ENCODE measurements at regions of chr21 and their contacts with region 1.

Region 1: DNA sequence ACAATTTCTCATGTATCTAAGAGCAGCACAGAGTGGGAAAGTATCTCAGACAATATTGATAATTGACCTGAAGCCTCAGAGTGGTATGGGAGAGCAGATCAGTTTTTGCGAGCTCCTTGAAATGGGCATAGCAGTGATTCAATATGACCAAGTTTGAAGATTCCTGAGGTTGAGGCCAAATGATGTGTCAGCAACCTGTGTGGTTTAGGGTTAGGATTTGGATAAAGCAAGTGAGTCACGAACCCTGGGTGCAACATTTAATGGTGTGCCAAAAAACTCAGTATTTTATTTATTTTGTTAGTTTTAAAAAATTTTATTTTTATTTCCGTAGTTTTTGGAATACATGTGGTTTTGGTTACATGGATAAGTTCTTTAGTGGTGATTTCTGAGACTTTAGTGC is 92.5 kb upstream of the C21orf91 start:
- H3K4me3 Mint-ChIP-seq: no peak overlapping the region
- H3K27ac Mint-ChIP-seq: no peak overlapping the region
- H3K4me1 Mint-ChIP-seq: no peaks in the 10 kb centered on the region
- H3K27me3 Mint-ChIP-seq: no peaks in the 10 kb centered on the region

Region 2: DNA sequence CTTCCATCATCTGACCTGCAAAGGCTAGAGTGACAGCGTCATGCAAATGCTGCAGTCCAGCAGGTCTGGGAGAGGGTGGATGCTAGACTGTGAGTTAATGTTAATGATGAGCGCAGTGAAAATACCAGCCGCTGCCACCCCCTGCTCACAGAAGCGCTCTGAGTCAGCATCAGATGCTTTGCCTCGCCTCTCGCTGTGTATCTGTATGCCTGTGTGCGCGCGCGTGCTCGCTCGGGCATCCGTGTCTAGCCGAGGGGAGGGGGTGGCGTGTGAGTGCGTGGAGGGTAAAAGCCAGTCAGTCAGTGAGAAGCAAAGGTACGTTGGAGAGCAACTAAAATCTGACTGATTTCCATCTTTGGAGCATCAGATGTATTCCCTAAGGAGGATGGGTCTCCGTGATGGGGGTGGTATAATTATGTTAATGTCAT is 1323.2 kb before region 1 on chr21:
- intact Hi-C with region 1: loop called (anchors 10 kb)
- H3K4me3 Mint-ChIP-seq: no peak overlapping the region
- H3K27ac Mint-ChIP-seq: no peak overlapping the region
- H3K4me1 Mint-ChIP-seq: peaks cover 4% of the 10 kb centered on the region
- H3K27me3 Mint-ChIP-seq: no peaks in the 10 kb centered on the region

Region 3: DNA sequence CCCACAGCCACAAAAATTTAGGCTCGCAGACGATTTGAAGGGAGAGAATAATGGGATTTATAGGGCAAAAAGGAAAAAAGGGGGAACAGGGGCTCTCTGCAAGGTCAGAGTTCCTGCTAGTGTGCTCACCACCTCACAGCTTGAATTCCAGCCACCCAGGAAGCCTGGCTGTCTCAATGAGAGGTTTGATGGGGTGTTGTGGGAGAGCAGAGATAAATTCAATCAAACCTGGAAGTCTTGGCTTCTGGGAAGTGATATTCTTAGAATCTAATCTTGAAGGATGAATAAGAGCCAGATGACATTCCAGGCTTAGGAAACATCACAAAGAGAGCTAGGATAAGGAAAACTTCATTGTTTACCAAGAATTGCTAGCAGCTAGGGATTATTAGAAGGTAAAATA is 45.0 kb before region 1 on chr21:
- intact Hi-C with region 1: no loop called
- H3K4me3 Mint-ChIP-seq: no peak overlapping the region
- H3K27ac Mint-ChIP-seq: no peak overlapping the region
- H3K4me1 Mint-ChIP-seq: no peaks in the 10 kb centered on the region
- H3K27me3 Mint-ChIP-seq: no peaks in the 10 kb centered on the region

Measured in dendritic cell treated with granulocyte-macrophage colony-stimulating factor and Interleukin-4, amounts not matched to agents 40 ng/mL and 50 ng/mL, for 4 days (primary cell).